CD4-positive, alpha-beta memory T cell (primary cell): ENCODE measurements at regions of chr11 and their contacts with region 1.

Region 1: DNA sequence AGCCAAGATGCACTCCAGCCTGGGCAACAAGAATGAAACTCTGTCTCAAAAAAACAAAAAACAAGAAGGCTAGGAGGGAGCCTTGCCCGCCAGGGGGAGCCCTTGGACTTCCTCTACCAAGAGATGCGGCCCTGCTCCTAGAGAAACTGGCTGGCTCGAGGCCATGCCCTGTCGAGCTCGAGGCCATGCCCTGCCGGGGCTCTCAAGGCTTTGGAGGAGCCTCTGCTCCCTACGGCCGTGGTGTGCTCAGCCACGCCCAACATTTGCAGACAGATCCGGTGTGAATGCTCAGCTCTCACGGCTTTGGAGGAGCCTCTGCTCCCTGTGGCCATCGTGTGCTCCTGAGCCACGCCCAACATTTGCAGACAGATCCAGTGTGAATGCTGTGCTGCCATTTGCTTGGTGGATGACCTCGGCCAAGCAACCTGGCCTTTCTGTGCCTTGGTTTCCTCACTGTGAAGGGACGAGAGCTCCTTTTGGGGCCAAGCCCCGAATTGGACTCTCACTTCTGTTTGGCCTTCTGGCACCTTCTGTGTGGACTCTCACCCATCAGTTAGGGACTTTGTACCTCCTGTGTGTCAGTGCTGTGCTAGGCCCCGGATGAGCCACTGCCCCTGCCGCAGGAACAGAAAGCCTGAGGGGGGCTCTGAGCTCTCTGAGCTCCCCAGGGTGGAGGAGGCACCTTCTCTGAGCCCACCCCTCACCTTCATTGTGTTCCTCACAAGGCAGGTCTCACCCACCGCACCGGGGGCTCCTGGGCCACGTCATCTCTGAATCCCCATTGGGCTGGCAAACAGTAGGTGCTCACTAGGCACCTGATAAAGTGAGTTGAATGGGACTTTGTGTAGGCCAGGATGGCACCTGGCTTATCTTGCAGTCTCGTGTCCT is 14.1 kb downstream of the C11orf24 start:
- DNase-seq: peak; percentile 86 to 91 (median 87)
- H3K4me3 ChIP-seq: no peak overlapping the region
- H3K4me3 Mint-ChIP-seq: peak overlapping the region in 1 of 8 donors; percentile 51
- H3K27ac ChIP-seq: no peak overlapping the region
- H3K27ac Mint-ChIP-seq: peak overlapping the region in 4 of 7 donors; percentile 25 to 81 (median 69)
- H3K4me1 ChIP-seq: peaks cover 7% of the 10 kb centered on the region
- H3K4me1 Mint-ChIP-seq: peaks cover 2 to 12% (median 5%) of the 10 kb centered on the region in 4 donors
- H3K27me3 ChIP-seq: no peaks in the 10 kb centered on the region
- H3K27me3 Mint-ChIP-seq: no peaks in the 10 kb centered on the region

Region 2: GRCh38 chr11:68212421-68213134 is 45.1 kb before region 1 on chr11:
- CTCF ChIA-PET with region 1: no interaction called
- POLR2A ChIA-PET with region 1: no interaction called
- intact Hi-C with region 1: no loop called
- DNase-seq: peak; percentile 45 to 68 (median 54)
- H3K4me3 ChIP-seq: peak overlapping the region; percentile 79 to 92
- H3K4me3 Mint-ChIP-seq: peak overlapping the region; percentile 93 to 99 (median 96)
- H3K27ac ChIP-seq: peak overlapping the region; percentile 73
- H3K27ac Mint-ChIP-seq: peak overlapping the region; percentile 93 to 98 (median 97)
- H3K4me1 ChIP-seq: peaks cover 55% of the 10 kb centered on the region
- H3K4me1 Mint-ChIP-seq: peaks cover 35 to 57% (median 46%) of the 10 kb centered on the region in 4 donors
- H3K27me3 ChIP-seq: no peaks in the 10 kb centered on the region
- H3K27me3 Mint-ChIP-seq: peaks cover 5 to 11% of the 10 kb centered on the region in 2 donors

Region 3: GRCh38 chr11:68383976-68384501 is 126.3 kb after region 1 on chr11:
- CTCF ChIA-PET with region 1: interaction called, 7 read pairs
- POLR2A ChIA-PET with region 1: no interaction called
- intact Hi-C with region 1: loop called (anchors 1 kb)
- DNase-seq: peak; percentile 31 to 58 (median 46)
- H3K4me3 ChIP-seq: no peak overlapping the region
- H3K4me3 Mint-ChIP-seq: no peak overlapping the region
- H3K27ac ChIP-seq: no peak overlapping the region
- H3K27ac Mint-ChIP-seq: no peak overlapping the region
- H3K4me1 ChIP-seq: no peaks in the 10 kb centered on the region
- H3K4me1 Mint-ChIP-seq: peaks cover 0 to 11% (median 3%) of the 10 kb centered on the region in 4 donors
- H3K27me3 ChIP-seq: no peaks in the 10 kb centered on the region
- H3K27me3 Mint-ChIP-seq: peaks cover 6 to 11% of the 10 kb centered on the region in 2 donors